ENCODE measurements at regions of chr9 and their contacts with region 1.

Region 1: GRCh38 chr9:128117613-128118471 is 9.7 kb downstream of the PTGES2 start:
- DNase-seq: peak; percentile 90 to 97 (median 93)
- ATAC-seq: peak; percentile 26 to 73 (median 62)
- H3K4me3 ChIP-seq: peak overlapping the region in 4 of 12 donors; percentile 7 to 28 (median 16)
- H3K27ac ChIP-seq: peak overlapping the region in 1 of 12 donors; percentile 18
- H3K4me1 ChIP-seq: peaks cover 0 to 10% (median 6%) of the 10 kb centered on the region in 12 donors
- H3K27me3 ChIP-seq: no peaks in the 10 kb centered on the region
- CTCF ChIP-seq: peak in 11 of 12 donors; percentile 99 to 100 (median 100)
- POLR2A ChIP-seq: peak in 1 of 2 donors; percentile 17

Region 2: GRCh38 chr9:127943731-127944144 is 174.1 kb before region 1 on chr9:
- intact Hi-C with region 1: loop called (anchors 2 to 5 kb)
- DNase-seq: peak; percentile 83 to 92 (median 90)
- ATAC-seq: peak; percentile 70 to 85 (median 75)
- H3K4me3 ChIP-seq: no peak overlapping the region
- H3K27ac ChIP-seq: peak overlapping the region in 1 of 12 donors; percentile 38
- H3K4me1 ChIP-seq: peaks cover 0 to 42% (median 20%) of the 10 kb centered on the region in 12 donors
- H3K27me3 ChIP-seq: no peaks in the 10 kb centered on the region
- CTCF ChIP-seq: peak; percentile 84 to 97 (median 88)
- POLR2A ChIP-seq: no peak

Region 3: DNA sequence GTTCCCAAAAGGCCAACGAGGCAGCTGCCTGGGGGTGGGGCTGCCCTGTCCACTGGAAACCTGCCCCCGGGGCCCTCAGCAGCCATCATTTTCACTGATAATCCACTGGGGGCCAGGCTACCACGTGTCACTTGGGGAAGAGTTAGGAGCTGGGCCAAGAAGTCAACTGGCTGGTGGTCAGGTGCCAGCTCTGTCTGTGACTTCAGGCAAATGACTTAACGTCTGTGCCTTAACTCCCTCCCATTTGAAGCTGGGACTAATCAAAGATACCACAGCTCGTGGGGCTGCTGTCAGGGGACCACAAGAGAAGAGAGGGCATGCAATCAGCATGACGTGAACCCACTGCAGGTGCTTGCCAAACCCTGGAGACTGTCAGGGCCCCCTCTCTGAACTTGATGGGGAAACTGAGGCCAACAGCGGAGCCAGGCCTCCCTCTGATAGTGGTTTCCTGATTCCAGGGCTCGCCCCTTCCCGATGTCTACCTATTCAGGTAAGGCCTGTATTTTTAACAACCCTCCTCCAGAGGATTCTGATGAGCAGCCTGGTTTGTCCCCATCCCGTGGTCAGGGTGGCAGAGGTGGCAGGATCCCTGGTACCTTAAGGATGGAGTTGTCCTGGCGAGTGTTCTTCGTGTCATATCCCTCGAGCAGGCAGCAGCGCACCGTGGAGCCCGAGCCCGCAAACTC is 167.9 kb before region 1 on chr9:
- intact Hi-C with region 1: loop called in 1 of 10 experiments (anchors 5 kb)
- DNase-seq: peak in 3 of 5 donors; percentile 62 to 72 (median 68)
- ATAC-seq: peak; percentile 10 to 61 (median 40)
- H3K4me3 ChIP-seq: peak overlapping the region in 5 of 12 donors; percentile 12 to 27 (median 19)
- H3K27ac ChIP-seq: peak overlapping the region; percentile 53 to 90 (median 80)
- H3K4me1 ChIP-seq: peaks cover 0 to 86% (median 48%) of the 10 kb centered on the region in 12 donors
- H3K27me3 ChIP-seq: no peaks in the 10 kb centered on the region
- CTCF ChIP-seq: no peak
- POLR2A ChIP-seq: no peak

Region 4: GRCh38 chr9:128034821-128035764 is 82.7 kb before region 1 on chr9:
- intact Hi-C with region 1: loop called in 1 of 10 experiments (anchors 2 kb)
- DNase-seq: peak; percentile 62 to 75 (median 66)
- ATAC-seq: peak; percentile 92 to 99 (median 96)
- H3K4me3 ChIP-seq: no peak overlapping the region
- H3K27ac ChIP-seq: no peak overlapping the region
- H3K4me1 ChIP-seq: peaks cover 0 to 21% (median 2%) of the 10 kb centered on the region in 12 donors
- H3K27me3 ChIP-seq: no peaks in the 10 kb centered on the region
- CTCF ChIP-seq: peak; percentile 80 to 91 (median 87)
- POLR2A ChIP-seq: no peak

Region 5: DNA sequence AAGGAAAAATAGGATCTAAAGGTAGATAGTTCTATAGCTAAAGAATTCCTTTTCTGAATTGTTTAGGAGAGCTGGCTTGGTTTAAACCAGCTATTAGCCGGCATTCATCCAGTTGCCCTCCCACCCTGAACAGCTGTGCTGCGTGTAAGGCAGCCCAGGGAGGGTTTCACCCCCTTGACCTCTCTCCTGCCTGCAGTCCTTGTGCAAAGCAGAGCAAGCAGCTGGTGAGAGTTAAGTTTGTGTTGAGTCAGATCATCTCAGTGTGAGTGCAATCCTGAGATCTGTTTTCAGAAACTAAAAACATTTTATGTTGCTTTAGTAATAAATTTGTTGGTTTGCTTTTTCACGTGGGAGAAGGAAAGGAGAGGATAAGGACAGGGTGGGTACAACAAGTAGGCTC is 36.8 kb before region 1 on chr9:
- intact Hi-C with region 1: loop called in 1 of 10 experiments (anchors 5 kb)
- DNase-seq: peak in 2 of 5 donors; percentile 71 to 74
- ATAC-seq: peak in 3 of 4 donors; percentile 70 to 86 (median 78)
- H3K4me3 ChIP-seq: no peak overlapping the region
- H3K27ac ChIP-seq: peak overlapping the region in 9 of 12 donors; percentile 12 to 69 (median 44)
- H3K4me1 ChIP-seq: peaks cover 0 to 64% (median 24%) of the 10 kb centered on the region in 12 donors
- H3K27me3 ChIP-seq: no peaks in the 10 kb centered on the region
- CTCF ChIP-seq: no peak
- POLR2A ChIP-seq: no peak